Ovary (tissue), 10 donors: ENCODE measurements at regions of chr10 and their contacts with region 1.

Region 1: DNA sequence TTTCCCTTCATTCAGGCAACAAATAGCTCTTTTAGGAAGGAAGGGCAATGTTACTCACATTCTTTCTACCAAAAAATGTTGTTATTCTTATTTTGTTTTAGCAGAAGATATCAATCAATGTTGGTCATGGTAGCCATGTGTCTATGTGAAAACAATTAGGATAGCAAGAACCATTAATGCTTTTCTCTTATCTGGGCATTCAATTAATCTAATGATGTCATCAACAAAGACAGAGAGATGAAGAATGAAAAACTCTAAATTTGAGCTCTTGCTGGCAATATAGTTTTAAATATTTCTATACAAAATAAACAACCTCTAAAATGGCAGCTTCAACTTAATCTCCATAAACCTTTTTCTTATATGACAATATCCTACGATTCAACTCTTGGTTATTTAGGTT is 353.7 kb upstream of the ANKRD30A start:
- DNase-seq: no peak
- H3K4me3 ChIP-seq: no peak overlapping the region
- H3K27ac ChIP-seq: no peak overlapping the region
- H3K4me1 ChIP-seq: no peaks in the 10 kb centered on the region
- H3K27me3 ChIP-seq: no peaks in the 10 kb centered on the region
- CTCF ChIP-seq: no peak
- EP300 ChIP-seq: no peak
- POLR2A ChIP-seq: no peak

Region 2: DNA sequence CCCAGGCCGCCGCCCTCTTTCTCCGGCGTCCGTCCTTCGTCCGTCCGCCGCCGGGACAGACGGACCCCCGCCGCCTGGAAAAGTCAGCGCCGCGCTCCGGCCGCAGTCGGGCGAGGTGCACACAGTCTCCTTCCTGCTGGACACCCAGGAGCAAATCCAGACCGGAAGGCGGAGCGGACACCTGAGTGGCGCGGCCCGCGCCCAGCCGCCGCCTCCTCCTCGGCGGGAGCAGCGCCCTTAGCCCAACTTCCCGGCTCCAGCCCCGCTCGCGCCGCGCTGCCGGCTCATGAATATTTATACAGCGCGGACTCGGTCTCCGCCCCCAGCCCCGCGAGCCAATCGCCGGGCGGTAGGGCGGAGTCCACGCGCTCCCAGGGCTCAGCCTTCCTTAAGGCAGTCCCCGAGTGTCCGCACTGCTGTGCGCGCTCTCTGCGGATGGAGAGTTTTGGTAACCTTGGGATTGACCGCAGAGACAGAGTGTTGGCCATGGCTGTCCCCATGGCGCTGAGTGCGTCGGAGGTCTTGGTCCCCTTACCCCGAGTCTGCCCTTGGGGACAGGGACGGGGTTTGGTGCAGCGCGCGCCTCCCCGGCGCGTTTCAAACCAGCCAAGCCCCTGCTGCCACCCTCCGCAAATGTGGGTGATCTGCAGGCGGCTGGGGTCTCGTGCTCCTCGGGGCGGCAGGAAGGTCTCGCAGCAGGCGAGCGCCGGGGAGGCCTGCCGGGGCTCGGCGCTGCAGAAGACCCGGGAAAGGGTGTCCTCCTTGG is 1129.5 kb before region 1 on chr10 and contains the start of gene FZD8:
- intact Hi-C with region 1: loop called (anchors 2 to 10 kb)
- DNase-seq: peak; percentile 83 to 92 (median 88)
- H3K4me3 ChIP-seq: peak within 1 kb of the TSS; percentile 57
- H3K27ac ChIP-seq: peak within 1 kb of the TSS; percentile 45 to 71
- H3K4me1 ChIP-seq: peaks cover 9% of the 10 kb centered on the region
- H3K27me3 ChIP-seq: no peaks in the 10 kb centered on the region
- CTCF ChIP-seq: peak in 1 of 3 donors; percentile 6
- EP300 ChIP-seq: no peak
- POLR2A ChIP-seq: peak; percentile 78
- total RNA-seq, gene FZD8: 1.7 to 14.9 (median 3.7) TPM